Adrenal gland (tissue), 19 donors: ENCODE measurements at regions of chr9 and their contacts with region 1.

Region 1: DNA sequence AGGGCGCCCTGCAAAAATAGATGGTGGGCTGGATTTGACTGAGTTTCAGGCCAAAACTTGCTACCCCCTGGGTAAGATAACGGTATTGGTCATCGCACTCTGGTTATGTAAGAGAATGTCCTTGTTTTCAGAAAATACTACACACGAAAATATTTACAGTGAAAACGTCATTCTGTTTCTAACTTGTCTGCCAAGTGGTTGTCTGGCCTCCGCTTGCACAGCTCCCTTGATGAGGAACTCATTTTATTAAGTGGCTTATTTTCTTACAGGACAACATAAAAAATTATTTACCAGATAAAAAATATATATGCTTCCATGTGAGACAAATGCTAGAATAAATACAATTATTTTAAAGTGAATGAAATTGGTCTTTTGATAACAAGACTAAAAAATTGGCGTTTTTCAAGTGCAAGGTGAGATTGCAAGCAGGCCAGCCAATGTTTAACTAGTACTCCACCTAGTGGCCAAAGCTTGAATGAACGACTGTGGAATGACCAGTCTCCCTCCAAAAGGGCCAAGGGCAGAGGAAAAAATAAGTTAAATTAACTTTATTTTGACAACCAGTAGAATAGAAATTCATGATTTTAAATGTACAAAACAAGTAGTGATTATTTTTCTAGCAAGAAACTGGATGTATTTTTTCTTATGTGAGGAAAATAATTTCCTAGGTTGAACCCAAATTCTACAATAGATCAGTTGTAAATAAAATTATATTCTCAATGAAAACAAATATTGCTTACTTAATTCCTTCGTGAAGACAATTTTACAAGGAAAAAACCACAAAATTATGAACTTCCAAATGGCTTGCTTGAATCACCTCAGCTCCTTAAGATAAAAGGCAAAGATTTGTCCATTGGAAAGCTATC is 93.2 kb downstream of the ZFAND5 start:
- DNase-seq: peak; percentile 36 to 74 (median 68)
- H3K4me3 ChIP-seq: no peak overlapping the region
- H3K27ac ChIP-seq: no peak overlapping the region
- H3K4me1 ChIP-seq: no peaks in the 10 kb centered on the region
- H3K27me3 ChIP-seq: no peaks in the 10 kb centered on the region
- CTCF ChIP-seq: peak; percentile 71 to 93 (median 82)
- POLR2A ChIP-seq: no peak

Region 2: DNA sequence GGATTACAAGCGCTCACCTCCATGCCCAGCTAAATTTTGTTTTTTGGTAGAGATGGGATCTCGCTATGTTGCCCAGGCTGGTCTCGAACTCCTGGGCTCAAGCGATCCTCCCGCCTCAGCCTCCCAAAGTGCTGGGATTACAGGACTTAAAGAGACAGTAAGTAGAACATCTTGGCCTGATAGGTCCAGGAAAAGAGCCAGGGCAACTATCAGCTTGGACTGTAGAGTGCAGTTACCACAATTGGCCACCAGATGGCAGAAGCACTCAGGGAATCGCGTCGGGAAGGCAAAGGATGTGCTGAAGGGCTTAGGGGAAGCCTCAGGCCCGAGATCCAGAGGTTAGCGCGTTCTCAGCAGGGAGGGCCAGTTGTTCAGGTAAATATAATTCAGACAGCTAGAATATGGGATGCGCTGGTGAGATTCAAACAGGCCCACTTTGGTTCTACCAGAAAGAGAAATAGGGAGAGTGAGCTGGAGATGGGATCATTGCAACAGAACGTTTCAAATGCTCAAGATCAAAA is 232.9 kb before region 1 on chr9:
- intact Hi-C with region 1: loop called (anchors 5 kb)
- DNase-seq: peak; percentile 65 to 92 (median 80)
- H3K4me3 ChIP-seq: no peak overlapping the region
- H3K27ac ChIP-seq: no peak overlapping the region
- H3K4me1 ChIP-seq: no peaks in the 10 kb centered on the region
- H3K27me3 ChIP-seq: no peaks in the 10 kb centered on the region
- CTCF ChIP-seq: peak in 5 of 6 experiments; percentile 91 to 96 (median 94)
- POLR2A ChIP-seq: no peak

Region 3: DNA sequence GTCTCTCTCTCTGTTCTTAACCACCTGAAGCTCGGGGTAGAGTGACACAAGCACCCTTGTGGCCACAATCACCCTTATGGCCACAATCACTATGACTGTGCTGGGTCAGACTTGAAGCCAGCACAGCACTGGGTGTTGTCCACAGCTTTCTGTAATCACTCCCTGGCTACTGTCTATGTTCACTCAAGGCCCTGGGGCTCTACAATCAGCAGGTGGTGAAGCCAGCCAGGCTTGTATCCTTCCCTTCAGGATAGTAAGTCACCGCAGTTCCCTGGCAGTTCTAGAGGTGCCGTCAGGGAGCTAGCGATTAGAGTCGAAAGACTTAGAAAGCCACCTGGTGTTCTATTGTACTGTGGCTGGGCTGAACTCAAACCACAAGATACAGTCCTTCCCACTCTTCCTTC is 78.4 kb before region 1 on chr9:
- intact Hi-C with region 1: no loop called
- DNase-seq: no peak
- H3K4me3 ChIP-seq: no peak overlapping the region
- H3K27ac ChIP-seq: no peak overlapping the region
- H3K4me1 ChIP-seq: no peaks in the 10 kb centered on the region
- H3K27me3 ChIP-seq: peaks cover 3% of the 10 kb centered on the region
- CTCF ChIP-seq: no peak
- POLR2A ChIP-seq: no peak